ENCODE measurements at regions of chr19 and their contacts with region 1.

Region 1: GRCh38 chr19:48842789-48843162 is 6.5 kb upstream of the HSD17B14 start:
- DNase-seq: no peak
- H3K4me3 ChIP-seq: no peak overlapping the region
- CTCF ChIP-seq: peak; percentile 50

Region 2: DNA sequence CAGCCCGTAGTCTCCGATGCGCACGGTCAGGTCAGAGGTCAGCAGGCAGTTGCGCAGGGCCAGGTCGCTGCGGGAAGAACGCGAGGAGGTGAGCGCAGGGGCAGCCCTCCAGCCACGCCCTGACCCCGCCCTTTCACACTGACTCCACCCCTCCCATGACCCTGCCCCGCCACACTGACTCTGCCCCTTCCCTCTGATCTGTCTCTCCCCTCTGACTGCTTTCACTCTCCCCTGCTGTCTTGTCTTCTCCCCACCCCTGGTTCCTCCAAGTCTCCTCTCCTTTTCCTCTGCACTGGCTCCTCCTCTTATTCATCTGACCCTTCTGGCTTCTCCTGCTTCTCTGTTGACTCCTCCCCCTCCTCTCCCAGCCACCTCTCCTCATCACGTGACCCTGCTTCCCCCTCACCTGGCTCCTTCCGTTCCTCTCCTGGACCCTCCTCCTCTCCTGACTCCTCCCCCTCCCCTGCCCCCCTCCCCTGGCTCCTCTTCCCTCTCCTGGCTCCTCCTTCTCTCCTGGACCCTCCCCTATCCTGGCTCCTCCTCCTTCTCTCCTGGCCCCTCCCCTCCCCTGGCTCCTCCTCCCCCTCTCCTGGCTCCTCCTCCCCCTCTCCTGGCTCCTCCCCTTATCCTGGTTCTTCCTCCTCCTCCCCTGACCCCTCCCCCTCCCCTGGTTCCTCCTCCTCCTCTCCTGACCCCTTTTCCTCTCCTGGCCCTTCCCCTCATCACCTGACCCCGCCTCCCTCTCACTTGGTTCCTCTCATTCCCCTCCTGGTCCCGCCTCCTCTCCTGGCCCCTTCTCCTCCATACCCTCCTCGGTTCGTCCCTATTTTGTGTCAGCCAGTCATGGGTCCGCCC is 341.1 kb before region 1 on chr19:
- CTCF ChIA-PET with region 1: no interaction called
- POLR2A ChIA-PET with region 1: no interaction called
- DNase-seq: no peak
- H3K4me3 ChIP-seq: no peak overlapping the region
- CTCF ChIP-seq: no peak

Region 3: DNA sequence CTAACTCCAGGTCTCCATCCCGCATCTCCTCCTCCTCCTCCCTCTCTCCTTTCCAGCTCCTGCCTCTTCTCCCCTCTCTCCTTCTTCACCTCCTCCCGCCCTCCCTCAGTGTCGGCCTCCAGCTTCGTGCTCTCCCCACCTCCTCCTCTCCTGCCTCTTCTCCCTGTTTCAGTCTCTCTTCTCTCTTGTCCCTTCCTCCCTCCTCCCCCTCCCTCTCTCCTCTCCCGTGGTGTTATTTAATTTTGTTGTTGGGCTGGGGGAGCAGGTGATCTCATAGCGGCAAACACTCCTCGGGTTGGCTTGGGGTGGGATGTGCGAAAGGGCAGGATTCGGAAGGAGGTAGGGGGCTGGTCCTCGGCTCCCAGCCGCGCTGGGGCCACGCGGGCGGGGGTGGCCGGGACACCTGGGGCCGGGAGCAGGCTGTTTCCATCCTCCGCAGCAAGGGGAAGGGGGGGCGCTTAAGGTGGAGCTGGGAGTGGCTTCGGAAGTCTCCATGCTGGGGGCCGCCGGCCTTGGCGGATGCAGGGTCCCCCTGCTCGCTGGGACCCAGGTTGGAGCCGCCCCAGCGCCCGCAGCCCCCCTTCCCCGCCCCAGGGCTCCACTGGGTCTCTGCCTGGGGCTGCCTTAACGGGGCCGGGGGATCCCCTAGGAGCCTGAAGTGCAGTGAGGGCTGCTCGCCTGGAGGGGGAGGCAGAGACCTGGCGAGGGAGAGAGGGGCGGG is 196.6 kb before region 1 on chr19 and contains the start of gene CA11:
- CTCF ChIA-PET with region 1: interaction called, 29 read pairs
- POLR2A ChIA-PET with region 1: no interaction called
- DNase-seq: no peak
- H3K4me3 ChIP-seq: peak within 1 kb of the TSS; percentile 57
- CTCF ChIP-seq: peak; percentile 95

Region 4: DNA sequence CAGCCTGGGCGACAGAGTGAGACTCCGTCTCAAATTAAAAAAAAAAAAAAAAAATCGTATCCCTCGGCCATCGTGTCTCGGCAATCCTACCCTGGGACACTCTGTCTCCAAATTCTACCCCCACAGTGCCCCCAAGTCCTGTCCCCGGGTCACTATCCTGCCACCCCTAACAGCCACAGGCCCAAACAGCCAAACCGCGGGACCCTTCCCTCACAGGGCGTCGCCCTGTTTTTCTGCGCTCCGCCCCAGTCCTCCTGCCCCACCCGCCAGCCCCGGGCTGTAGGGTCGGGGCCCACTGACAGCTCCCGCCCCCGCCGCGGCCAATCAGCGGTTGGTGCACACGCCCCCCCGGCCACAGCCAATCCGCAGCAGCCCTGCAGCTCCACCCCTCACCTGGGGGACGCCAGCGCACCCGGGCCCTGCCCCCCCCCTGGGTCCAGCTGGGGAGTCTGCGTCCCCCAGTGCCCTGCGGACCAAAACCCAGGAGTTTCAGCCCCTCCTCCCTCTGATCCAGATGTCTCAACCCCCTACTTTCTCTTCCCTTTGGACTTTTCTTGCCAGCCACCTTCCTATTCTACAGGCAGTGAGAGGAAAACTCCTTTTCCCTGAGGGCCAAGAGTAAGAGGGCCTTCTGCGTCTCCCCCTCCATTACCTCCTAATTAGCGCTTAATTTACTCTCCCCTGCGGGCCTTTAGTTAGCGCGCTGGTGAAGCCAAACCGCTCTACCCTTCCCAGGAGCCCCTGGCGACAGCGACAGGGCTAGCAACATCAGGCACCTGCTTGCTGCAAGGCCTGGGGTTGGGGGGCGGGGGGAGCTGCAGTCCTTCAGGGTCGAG is 30.5 kb before region 1 on chr19:
- CTCF ChIA-PET with region 1: interaction called, 84 read pairs
- POLR2A ChIA-PET with region 1: no interaction called
- DNase-seq: no peak
- H3K4me3 ChIP-seq: peak overlapping the region; percentile 72
- CTCF ChIP-seq: no peak

Region 5: GRCh38 chr19:48856921-48857320 is 14.1 kb after region 1 on chr19:
- CTCF ChIA-PET with region 1: interaction called, 125 read pairs
- POLR2A ChIA-PET with region 1: interaction called, 3 read pairs
- DNase-seq: no peak
- H3K4me3 ChIP-seq: no peak overlapping the region
- CTCF ChIP-seq: no peak

Region 6: GRCh38 chr19:48970923-48971395 is 128.2 kb after region 1 on chr19:
- CTCF ChIA-PET with region 1: interaction called, 61 read pairs
- POLR2A ChIA-PET with region 1: interaction called, 7 read pairs
- DNase-seq: no peak
- H3K4me3 ChIP-seq: no peak overlapping the region
- CTCF ChIP-seq: peak; percentile 94

Measured in AG04449 (cell line).